Activated T-helper 2 cell treated with anti-CD3 and anti-CD28 coated beads, Interferon-gamma antibody, Interleukin-2, Interleukin-4, amounts not matched to agents 10 μg/mL and 5 μg/mL and 100 μg/mL, durations not matched to agents 14 hours and 24 hours and 36 hours (primary cell): ENCODE measurements at regions of chr18 and their contacts with region 1.

Region 1: DNA sequence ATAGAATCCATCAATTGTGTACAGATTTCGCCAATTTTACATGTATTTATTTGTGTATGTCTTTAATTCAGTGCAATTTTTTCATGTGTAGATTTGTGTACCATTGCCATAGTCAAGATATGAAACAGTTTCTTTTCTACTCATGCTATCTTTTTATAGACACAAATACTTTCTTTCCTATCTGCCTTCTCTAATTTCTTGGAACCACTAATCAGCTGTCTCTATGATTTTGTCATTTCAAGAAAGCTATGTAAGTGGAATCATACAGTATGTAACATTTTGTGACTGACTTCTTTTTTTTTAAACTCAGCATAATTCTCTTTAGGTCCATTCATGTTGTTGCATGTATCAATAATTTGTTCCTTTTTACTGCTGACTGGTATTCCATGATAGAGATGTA is 33.3 kb downstream of the KIAA1328 start:
- DNase-seq: no peak
- H3K4me3 Mint-ChIP-seq: no peak overlapping the region
- H3K27ac Mint-ChIP-seq: no peak overlapping the region
- H3K4me1 Mint-ChIP-seq: peaks cover 2% of the 10 kb centered on the region
- H3K27me3 Mint-ChIP-seq: no peaks in the 10 kb centered on the region

Region 2: DNA sequence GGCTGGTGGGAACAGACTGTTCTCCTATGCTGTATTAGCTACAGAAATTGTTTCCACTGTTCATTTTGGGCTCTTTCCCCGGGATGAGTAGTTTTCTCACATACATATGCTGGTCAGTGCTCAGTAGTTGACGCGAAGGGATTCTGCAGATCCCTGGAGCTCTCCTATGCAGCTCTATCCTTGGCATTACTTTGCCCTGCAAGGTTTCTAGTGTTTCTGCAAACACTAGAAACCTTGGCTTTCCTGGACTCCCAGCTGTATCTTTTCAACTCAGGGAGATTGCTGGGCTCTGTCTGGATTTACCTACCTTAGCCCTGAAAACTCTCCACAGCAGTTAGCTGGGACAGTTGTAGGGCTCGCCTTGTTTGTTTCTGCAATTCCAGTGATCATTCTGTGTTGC is 22.3 kb before region 1 on chr18:
- intact Hi-C with region 1: no loop called
- DNase-seq: no peak
- H3K4me3 Mint-ChIP-seq: no peak overlapping the region
- H3K27ac Mint-ChIP-seq: no peak overlapping the region
- H3K4me1 Mint-ChIP-seq: peaks cover 1% of the 10 kb centered on the region
- H3K27me3 Mint-ChIP-seq: no peaks in the 10 kb centered on the region

Region 3: DNA sequence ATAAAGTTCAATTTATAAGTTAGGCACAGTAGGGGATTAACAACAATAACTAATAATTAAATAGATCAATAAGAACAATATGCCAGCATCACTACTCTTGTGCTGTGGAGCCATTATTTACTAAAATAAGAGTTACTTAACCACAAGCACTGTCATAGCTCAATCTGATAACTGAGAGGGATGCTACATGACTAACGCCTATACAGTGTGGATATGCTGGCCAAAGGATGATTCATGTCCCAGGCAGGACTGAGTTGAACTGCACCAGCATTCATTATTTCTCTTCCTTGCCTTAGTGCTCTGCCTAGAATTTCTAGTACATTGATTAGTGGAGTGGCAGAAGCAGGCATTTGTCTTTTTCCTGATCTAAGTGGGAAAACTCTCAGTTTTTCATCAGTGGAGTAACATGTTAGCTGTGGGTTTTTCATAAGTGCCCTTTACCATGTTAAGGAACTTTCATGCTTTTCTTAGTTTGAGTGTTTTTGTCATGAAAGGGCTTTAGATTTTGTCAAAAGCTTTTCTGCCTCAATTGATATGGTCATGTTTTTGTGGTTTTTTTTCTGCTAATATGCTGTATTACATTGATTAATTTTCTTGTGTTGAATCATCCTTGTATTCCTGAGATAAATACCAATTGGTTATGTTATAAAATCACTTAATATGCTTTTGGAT is 11.5 kb before region 1 on chr18:
- intact Hi-C with region 1: loop called (anchors 1 kb)
- DNase-seq: no peak
- H3K4me3 Mint-ChIP-seq: no peak overlapping the region
- H3K27ac Mint-ChIP-seq: peak overlapping the region; percentile 7
- H3K4me1 Mint-ChIP-seq: peaks cover 7% of the 10 kb centered on the region
- H3K27me3 Mint-ChIP-seq: no peaks in the 10 kb centered on the region

Region 4: DNA sequence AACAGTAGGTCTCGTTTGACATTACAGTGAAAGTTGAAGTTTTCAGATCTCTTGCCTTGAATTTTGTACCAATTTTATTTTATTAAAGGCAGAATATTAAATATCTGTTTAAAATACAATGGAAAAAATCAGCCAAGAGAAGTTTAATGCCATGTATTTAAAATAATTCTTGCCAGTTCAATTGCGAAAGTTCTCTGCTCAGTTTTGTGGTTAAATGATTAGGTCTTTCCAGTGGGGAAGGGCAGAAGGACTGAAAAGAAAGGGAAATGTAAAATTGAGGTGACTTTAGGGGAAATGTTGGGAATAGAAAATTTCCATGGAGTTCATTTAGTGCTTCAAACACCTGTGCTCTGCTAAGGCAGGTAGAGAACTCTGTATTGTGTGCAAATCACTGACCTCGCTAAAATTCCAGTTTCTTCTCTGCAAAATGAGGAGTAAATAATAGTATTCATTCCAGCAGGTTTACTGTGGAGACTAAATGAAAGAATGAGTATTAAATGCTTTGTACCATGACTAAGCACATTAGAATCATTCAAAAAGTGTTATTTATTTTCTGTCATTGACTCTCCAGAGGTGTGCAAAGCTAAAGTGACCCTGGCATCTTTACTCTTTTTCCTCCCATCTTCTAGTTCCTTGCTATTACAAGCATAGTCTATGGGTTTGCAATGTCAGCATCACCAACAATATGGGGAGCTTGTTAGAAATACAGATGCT is 41.2 kb after region 1 on chr18:
- intact Hi-C with region 1: no loop called
- DNase-seq: no peak
- H3K4me3 Mint-ChIP-seq: no peak overlapping the region
- H3K27ac Mint-ChIP-seq: no peak overlapping the region
- H3K4me1 Mint-ChIP-seq: no peaks in the 10 kb centered on the region
- H3K27me3 Mint-ChIP-seq: no peaks in the 10 kb centered on the region